Endothelial cell of umbilical vein (primary cell): ENCODE measurements at regions of chr4 and their contacts with region 1.

Region 1: DNA sequence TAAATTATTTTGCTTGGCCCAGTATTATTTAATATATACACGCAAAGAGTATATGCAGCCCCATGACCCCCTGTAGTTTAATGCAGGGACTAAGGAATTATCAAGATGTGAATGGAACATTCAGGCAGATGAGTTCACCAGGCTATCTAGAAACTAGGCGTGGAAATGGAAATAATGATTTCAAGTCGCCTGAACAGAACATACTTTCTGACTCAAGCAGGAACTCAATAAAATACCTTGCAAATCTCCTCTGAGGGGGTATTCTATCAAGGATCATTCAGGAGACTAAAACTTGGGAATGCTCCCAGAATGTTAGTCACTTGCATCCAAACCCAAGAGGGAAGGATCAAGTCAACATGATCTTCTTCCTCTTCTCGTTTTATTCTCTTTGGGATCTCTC is 59.6 kb upstream of the RASSF6 start:
- DNase-seq: peak; percentile 86
- H3K4me3 ChIP-seq: no peak overlapping the region
- H3K27ac ChIP-seq: peak overlapping the region; percentile 61
- H3K4me1 ChIP-seq: peaks cover 30% of the 10 kb centered on the region
- H3K27me3 ChIP-seq: no peaks in the 10 kb centered on the region
- CTCF ChIP-seq: no peak
- POLR2A ChIP-seq: no peak

Region 2: DNA sequence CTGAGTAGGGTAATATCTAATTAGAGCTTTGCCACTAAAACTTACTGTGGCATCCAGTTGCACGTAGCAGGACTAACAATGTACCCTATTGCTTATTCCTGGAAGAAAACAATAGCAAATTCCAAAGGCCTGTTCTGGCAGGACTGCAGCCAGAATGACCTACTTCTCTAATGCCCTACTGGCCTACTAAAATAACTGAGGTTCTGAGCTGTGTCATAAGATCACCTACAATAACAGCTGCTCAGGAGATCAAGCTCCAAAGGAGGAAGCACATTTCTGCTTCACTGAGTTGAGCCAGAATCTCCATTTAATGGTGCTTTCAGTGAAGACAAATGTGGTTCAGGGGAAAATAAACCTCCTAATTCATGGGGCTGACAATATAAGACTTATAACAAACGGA is 18.4 kb after region 1 on chr4:
- CTCF ChIA-PET with region 1: interaction called, 10 read pairs
- POLR2A ChIA-PET with region 1: interaction called, 3 read pairs
- dilution Hi-C with region 1: no loop called
- intact Hi-C with region 1: no loop called
- DNase-seq: peak; percentile 95
- H3K4me3 ChIP-seq: no peak overlapping the region
- H3K27ac ChIP-seq: peak overlapping the region; percentile 38
- H3K4me1 ChIP-seq: peaks cover 19% of the 10 kb centered on the region
- H3K27me3 ChIP-seq: no peaks in the 10 kb centered on the region
- CTCF ChIP-seq: no peak
- POLR2A ChIP-seq: no peak

Region 3: GRCh38 chr4:73704314-73705055 is 24.6 kb after region 1 on chr4:
- CTCF ChIA-PET with region 1: interaction called, 5 read pairs
- POLR2A ChIA-PET with region 1: no interaction called
- dilution Hi-C with region 1: no loop called
- intact Hi-C with region 1: loop called (anchors 2 kb)
- DNase-seq: peak; percentile 99
- H3K4me3 ChIP-seq: no peak overlapping the region
- H3K27ac ChIP-seq: peak overlapping the region; percentile 70
- H3K4me1 ChIP-seq: peaks cover 61% of the 10 kb centered on the region
- H3K27me3 ChIP-seq: no peaks in the 10 kb centered on the region
- CTCF ChIP-seq: no peak
- POLR2A ChIP-seq: no peak